A673 (cell line): ENCODE measurements at regions of chr3 and their contacts with region 1.

Region 1: GRCh38 chr3:179562591-179563270 is at the start of gene ACTL6A:
- DNase-seq: peak; percentile 100
- H3K4me3 ChIP-seq: peak within 1 kb of the TSS; percentile 90
- H3K27ac ChIP-seq: peak within 1 kb of the TSS; percentile 93
- H3K4me1 ChIP-seq: peaks cover 14% of the 10 kb centered on the region
- H3K27me3 ChIP-seq: no peaks in the 10 kb centered on the region
- CTCF ChIP-seq: no peak
- total RNA-seq, gene ACTL6A: 140 and 153 TPM in 2 replicates

Region 2: DNA sequence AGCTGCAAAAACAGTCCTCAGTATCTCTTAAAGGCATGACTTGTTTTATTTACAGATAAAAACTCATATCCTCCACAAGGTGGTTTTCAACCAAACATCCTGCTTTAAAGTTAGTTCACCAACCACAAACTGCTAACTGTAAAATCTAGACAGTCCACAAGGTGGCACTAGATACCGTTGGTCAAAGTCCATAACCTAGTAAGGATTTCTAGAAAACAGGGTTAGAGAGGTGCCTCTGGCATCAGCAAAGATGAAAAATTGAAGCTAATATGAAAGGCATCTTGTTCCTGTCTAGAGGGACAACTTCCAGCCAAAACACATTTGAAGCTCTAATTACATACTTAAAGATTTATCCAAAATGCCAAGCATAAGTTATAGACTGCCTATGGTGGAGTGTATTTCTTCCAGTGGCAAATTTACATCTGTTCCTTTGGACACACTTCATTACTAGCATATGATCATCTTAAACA is 547.1 kb before region 1 on chr3:
- CTCF ChIA-PET with region 1: no interaction called
- POLR2A ChIA-PET with region 1: no interaction called
- intact Hi-C with region 1: loop called (anchors 5 kb)
- DNase-seq: peak; percentile 86
- H3K4me3 ChIP-seq: no peak overlapping the region
- H3K27ac ChIP-seq: no peak overlapping the region
- H3K4me1 ChIP-seq: peaks cover 29% of the 10 kb centered on the region
- H3K27me3 ChIP-seq: no peaks in the 10 kb centered on the region
- CTCF ChIP-seq: peak; percentile 87

Region 3: DNA sequence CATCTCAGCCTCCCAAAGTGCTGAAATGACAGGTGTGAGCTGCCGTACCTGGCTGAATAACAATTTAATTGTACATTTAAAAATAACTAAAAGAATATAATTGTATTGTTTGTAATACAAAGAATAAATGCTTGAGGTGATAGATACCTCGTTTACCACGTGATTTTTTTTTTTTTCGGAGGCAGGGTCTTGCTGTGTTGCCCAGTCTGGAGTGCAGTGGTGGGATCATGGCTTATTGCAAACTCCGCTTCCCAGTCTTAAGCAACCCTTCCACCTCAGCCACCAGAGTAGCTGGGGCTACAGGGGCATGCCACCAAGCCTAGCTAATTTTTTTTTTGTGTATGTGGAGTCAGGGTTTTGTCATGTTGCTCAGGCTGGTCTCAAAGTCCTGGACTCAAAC is 199.4 kb before region 1 on chr3:
- CTCF ChIA-PET with region 1: interaction called, 16 read pairs
- POLR2A ChIA-PET with region 1: no interaction called
- intact Hi-C with region 1: no loop called
- DNase-seq: no peak
- H3K4me3 ChIP-seq: no peak overlapping the region
- H3K27ac ChIP-seq: no peak overlapping the region
- H3K4me1 ChIP-seq: no peaks in the 10 kb centered on the region
- H3K27me3 ChIP-seq: no peaks in the 10 kb centered on the region
- CTCF ChIP-seq: no peak

Region 4: DNA sequence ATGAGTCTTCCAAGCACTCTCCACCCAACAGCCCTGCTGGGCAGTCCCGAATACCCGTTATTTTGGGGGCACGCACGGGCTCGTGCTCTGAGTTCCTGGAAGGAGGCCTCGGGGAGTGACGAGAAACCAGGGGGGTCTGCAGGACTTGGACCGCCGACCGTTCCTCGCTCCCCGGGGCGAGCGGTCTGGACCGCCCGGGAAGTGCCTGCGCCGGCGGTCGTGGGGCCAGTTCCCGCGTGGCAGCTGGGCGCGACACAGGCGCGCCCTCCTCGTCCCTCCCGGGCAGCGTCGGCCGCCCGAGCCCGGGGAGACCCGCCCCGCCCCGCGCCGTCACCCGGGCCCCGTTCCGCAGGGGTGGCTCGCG is 111.8 kb before region 1 on chr3:
- CTCF ChIA-PET with region 1: interaction called, 5 read pairs
- POLR2A ChIA-PET with region 1: interaction called, 4 read pairs
- intact Hi-C with region 1: loop called (anchors 1 kb)
- DNase-seq: peak; percentile 56
- H3K4me3 ChIP-seq: peak overlapping the region; percentile 65
- H3K27ac ChIP-seq: peak overlapping the region; percentile 94
- H3K4me1 ChIP-seq: peaks cover 43% of the 10 kb centered on the region
- H3K27me3 ChIP-seq: no peaks in the 10 kb centered on the region
- CTCF ChIP-seq: no peak